ENCODE measurements at regions of chr16 and their contacts with region 1.

Region 1: DNA sequence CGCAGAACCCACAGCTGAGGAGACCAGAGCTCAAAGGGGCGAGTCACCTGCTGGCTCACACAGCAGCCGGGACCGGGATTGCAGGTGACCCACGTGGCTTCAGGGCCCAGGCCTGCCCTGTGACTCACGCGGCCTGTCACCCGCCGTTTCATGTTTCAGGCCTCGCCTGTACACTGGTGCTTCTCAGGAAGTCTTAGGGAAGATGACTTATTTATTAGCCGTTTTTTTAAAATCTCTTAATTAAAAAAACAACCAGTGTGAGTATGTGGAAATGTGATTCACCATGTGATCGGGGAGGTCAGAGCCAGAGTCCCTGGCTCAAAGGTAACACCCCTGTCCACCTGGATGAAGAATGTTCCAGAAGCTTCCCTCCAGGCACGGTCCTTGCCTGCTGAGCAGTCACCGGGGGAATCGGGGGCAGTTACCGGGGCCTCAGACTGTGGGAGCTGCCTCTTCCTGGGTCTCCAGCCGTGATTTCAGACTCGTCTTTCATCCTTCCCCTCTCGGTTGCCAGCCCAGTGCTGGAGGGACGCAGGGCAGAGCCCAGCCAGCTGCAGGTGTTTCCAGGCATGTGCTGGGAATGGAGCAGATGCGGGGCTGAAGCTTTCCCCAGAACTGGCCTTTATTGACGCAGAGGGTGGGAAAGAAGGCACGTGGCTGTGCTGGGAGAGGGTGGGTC is 49.3 kb downstream of the CMIP start:
- DNase-seq: no peak
- ATAC-seq: no peak

Region 2: GRCh38 chr16:81444448-81445121 is 49.3 kb before region 1 on chr16 and contains the start of gene CMIP:
- intact Hi-C with region 1: loop called (anchors 2 kb)
- DNase-seq: peak; percentile 95
- ATAC-seq: peak; percentile 87
- total RNA-seq, gene CMIP: 10.5 TPM

Region 3: GRCh38 chr16:81616321-81617055 is 122.6 kb after region 1 on chr16:
- intact Hi-C with region 1: loop called (anchors 10 kb)
- DNase-seq: peak; percentile 87
- ATAC-seq: peak; percentile 47